ENCODE measurements at regions of chr11 and their contacts with region 1.

Region 1: DNA sequence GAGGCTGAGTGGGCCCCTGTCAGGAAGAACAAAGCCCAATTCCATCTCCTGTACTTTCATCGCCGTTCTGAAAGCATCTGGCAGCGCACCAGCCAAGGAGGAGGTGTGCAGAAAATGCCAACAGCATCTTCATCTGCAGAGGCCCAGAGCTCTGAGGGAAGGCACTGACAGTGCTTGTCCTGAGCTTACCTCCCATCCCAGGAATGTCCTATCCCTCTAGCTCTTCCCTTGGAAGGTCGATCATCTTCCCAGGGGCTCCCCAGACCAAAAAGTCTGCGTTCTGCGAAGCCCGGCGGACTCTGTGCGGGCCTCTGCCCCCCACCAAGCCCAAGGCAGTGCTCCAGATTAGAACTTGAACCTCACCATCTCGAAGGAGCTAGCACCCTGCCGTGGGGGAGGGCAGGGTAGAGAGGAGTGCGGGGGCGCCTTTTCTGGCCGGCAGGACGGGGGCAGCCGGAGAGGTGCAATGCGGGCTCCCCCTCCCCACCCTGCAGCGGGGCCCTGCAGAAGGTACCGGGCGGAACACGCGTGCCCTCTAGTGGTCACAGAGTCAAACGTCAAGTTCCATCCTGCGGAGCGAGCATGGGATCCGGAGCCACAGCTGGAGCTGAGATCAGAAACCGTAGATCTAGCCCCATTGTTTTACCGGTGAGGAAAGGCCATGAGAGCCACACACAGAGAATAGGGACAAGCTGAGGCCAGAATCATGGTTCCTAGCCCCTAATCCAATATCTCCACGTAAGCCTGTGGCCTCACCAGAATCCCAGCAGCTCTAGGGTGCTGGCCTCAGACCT is 5.0 kb downstream of the SCN2B start:
- DNase-seq: peak; percentile 61
- H3K4me3 ChIP-seq: no peak overlapping the region
- H3K27ac ChIP-seq: no peak overlapping the region
- H3K4me1 ChIP-seq: no peaks in the 10 kb centered on the region
- H3K27me3 ChIP-seq: peaks cover 15 to 31% of the 10 kb centered on the region in 2 experiments
- CTCF ChIP-seq: peak; percentile 75 to 91
- POLR2A ChIP-seq: no peak

Region 2: DNA sequence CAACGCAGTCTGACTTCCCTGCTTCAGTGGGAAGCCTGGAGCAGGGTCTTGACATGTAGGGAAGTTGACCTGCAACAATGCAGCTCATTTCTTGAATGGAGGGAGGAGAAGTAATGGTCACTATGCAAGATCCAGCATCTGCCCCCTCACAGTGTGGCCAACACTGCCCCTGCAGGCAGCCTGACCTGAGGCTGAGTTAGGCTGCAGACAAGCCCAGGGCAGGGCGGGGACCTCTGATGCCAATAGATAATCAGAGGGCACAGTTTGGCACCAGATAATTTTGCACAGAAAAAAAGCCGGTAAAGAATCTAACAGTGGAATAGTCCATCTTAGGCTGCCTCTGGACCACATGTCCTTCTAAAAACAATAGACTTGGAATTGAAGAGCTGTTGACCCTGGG is 556.7 kb before region 1 on chr11:
- CTCF ChIA-PET with region 1: no interaction called
- POLR2A ChIA-PET with region 1: no interaction called
- dilution Hi-C with region 1: no loop called
- intact Hi-C with region 1: no loop called
- DNase-seq: no peak
- H3K4me3 ChIP-seq: no peak overlapping the region
- H3K27ac ChIP-seq: no peak overlapping the region
- H3K4me1 ChIP-seq: no peaks in the 10 kb centered on the region
- H3K27me3 ChIP-seq: no peaks in the 10 kb centered on the region
- CTCF ChIP-seq: no peak
- POLR2A ChIP-seq: no peak

Region 3: DNA sequence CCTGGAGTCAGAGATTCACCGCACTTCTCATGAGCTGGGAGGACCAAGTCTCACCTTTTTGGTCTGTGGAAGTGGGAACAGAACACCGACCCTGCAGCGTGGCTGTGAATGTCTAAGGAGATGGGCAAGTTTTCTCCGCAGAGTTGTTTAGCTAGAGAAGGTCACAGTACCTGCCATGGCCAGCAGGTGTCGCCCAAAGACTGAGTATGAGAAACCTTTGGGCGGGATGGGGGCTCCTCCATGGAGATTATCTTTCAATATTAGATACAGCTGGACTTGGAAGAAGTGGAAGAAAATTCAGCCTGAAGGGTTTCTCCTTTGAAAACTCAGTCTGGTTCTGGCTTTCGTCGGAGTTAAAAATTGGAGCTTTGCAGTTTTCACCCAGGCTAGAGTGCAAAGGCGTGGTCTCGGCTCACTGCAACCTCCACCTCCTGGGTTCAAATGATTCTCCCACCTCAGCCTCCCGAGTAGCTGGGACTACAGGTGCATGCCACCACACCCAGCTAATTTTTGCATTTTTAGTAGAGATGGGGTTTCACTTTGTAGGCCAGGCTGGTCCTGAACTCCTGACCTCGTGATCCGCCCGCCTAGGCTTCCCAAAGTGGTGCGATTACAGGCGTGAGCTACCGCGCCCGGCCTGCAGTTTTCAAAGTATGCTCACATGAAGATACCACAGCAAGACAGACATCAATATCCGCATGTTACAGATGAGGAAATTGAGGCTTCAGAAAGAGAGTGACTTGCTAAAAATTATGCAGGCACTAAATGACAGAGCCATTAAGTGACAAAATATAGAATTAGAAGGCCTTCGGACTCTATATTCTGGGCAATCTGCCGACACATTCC is 363.8 kb before region 1 on chr11:
- CTCF ChIA-PET with region 1: interaction called, 22 read pairs
- POLR2A ChIA-PET with region 1: no interaction called
- dilution Hi-C with region 1: no loop called
- intact Hi-C with region 1: no loop called
- DNase-seq: peak; percentile 47
- H3K4me3 ChIP-seq: no peak overlapping the region
- H3K27ac ChIP-seq: no peak overlapping the region
- H3K4me1 ChIP-seq: no peaks in the 10 kb centered on the region
- H3K27me3 ChIP-seq: peaks cover 1 to 5% of the 10 kb centered on the region in 2 experiments
- CTCF ChIP-seq: peak; percentile 81 to 92
- POLR2A ChIP-seq: no peak

Region 4: DNA sequence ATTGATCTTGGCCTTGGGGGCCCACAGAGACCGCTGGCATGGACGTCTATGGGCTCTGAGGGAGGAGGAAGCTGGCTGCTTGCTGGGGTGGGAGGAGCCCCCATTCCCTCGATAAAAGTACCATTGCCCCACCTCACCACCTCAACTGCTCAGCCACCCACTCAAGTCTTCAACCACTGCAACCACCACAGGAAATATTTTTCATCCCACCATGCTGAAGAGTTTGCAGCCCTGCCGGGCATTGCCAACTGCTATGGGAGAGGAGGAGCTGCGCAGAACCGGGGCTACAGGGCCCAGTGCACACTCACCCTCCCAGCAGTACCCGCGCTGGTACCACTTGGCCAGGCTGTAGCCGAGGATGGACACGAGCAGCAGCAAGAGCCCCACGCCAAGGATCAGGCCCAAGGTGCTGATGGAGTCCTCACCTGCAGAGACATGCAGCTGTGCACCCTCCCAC is 156.1 kb before region 1 on chr11:
- CTCF ChIA-PET with region 1: no interaction called
- POLR2A ChIA-PET with region 1: no interaction called
- dilution Hi-C with region 1: no loop called
- intact Hi-C with region 1: no loop called
- DNase-seq: no peak
- H3K4me3 ChIP-seq: no peak overlapping the region
- H3K27ac ChIP-seq: no peak overlapping the region
- H3K4me1 ChIP-seq: no peaks in the 10 kb centered on the region
- H3K27me3 ChIP-seq: no peaks in the 10 kb centered on the region
- CTCF ChIP-seq: no peak
- POLR2A ChIP-seq: no peak

Region 5: DNA sequence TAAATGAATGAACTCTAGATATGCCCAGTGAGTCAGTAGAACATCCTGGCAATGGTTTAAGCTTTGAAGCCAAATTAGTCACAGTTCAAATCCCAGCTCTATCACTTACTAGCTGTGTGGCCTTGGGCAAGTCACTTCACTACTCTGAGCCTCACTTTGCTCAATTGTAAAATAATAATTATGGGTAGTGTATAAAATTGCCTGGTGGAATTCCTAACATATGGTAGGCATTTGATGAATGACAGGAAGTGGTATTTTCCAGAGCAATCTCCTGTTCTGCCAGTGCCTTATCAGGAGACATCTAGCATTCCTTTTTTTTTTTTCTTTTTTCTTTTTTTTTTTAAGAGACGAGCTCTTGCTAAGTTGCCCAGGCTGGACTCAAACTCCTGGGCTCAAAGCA is 31.9 kb before region 1 on chr11:
- CTCF ChIA-PET with region 1: interaction called, 112 read pairs
- POLR2A ChIA-PET with region 1: no interaction called
- dilution Hi-C with region 1: no loop called
- intact Hi-C with region 1: no loop called
- DNase-seq: no peak
- H3K4me3 ChIP-seq: no peak overlapping the region
- H3K27ac ChIP-seq: no peak overlapping the region
- H3K4me1 ChIP-seq: no peaks in the 10 kb centered on the region
- H3K27me3 ChIP-seq: peaks cover 16 to 31% of the 10 kb centered on the region in 2 experiments
- CTCF ChIP-seq: no peak
- POLR2A ChIP-seq: no peak

Region 6: DNA sequence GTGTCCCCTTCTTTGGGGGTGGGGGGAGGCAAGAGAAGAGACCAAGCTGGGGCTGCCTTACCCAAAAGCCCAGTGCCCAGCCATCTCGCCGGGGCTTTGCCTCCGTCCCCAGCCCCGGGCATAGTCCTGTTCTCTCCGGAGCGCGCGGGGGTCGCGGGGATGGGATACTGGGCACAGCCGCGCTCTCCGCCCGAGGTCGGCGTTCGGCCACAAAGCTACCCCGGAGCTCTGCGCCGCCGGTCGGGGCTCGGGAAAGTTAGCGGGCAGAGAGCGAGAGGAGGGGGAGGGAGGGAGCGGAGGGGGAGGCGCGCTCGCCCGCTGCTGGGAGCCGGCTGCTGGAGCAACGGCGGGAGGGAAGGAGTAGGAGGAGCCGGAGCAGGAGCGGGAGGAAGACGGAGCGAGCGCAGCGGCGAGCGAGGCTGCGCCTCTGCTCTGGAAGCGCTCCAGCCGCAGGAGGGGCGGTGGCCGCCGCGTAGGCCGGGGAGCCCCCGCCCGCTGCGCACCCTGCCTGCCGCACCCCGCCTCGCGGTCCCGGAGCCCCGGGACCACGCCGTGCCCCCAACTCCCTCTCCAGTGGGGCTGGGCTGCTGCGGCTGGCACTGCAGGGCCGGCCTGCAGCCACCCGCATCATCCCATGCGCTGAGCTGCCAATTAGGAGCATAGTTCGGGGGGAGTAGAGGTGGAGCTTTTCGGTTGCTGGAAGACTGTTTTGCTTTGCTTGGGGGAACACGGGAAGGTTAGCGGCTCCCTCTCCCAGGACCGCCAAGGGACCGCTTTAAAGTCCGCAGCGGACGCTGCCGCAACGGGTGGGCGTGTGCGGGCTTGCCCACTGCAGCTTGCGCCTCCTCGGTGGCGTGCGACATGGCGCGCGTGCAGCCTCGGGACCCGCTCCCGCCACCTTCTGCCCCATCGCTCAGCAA is 18.7 kb before region 1 on chr11 and contains the start of gene SCN4B:
- CTCF ChIA-PET with region 1: interaction called, 112 read pairs
- POLR2A ChIA-PET with region 1: no interaction called
- dilution Hi-C with region 1: no loop called
- intact Hi-C with region 1: no loop called
- DNase-seq: peak; percentile 43
- H3K4me3 ChIP-seq: peak within 1 kb of the TSS in 2 of 3 experiments; percentile 16 to 27
- H3K27ac ChIP-seq: no peak within 1 kb of the TSS
- H3K4me1 ChIP-seq: peaks cover 3% of the 10 kb centered on the region
- H3K27me3 ChIP-seq: peaks cover 74 to 80% of the 10 kb centered on the region in 2 experiments
- CTCF ChIP-seq: no peak
- POLR2A ChIP-seq: no peak
- total RNA-seq, gene SCN4B: 0.13 and 0.23 TPM in 2 replicates

Region 7: DNA sequence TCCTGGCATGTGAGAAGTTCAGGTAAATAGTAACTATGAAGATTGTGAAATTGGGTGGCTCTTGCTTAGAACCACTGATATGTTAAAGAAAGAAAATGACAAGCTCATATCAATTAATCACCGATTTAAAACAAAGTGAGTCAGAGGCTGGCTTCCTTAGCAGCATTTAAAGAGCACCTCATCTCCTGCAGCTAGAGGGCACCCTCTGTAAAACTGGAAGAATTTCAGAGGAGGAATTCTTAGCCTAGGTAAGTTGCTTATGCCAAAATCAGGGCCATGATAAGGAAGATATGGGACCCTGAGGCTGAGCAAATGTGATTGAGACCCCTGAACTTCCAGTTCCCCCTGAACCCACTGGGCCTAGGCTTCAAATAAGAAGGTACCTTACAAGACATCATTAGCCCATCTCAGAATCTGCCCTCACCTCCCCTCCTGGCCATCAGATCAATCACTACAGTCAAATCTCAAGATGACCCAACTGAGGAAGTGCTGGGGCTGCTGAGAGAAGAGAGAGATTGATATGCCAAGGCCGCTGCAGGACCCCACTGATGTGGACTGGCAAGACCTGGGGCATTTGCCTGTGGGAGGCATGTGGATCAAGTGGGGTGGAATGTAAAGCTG is 124.5 kb after region 1 on chr11:
- CTCF ChIA-PET with region 1: interaction called, 11 read pairs
- POLR2A ChIA-PET with region 1: no interaction called
- dilution Hi-C with region 1: no loop called
- intact Hi-C with region 1: no loop called
- DNase-seq: peak; percentile 59
- H3K4me3 ChIP-seq: no peak overlapping the region
- H3K27ac ChIP-seq: no peak overlapping the region
- H3K4me1 ChIP-seq: no peaks in the 10 kb centered on the region
- H3K27me3 ChIP-seq: peaks cover 1 to 5% of the 10 kb centered on the region in 2 experiments
- CTCF ChIP-seq: peak; percentile 52 to 63
- POLR2A ChIP-seq: no peak